CD4-positive, alpha-beta T cell (primary cell): ENCODE measurements at regions of chr15 and their contacts with region 1.

Region 1: DNA sequence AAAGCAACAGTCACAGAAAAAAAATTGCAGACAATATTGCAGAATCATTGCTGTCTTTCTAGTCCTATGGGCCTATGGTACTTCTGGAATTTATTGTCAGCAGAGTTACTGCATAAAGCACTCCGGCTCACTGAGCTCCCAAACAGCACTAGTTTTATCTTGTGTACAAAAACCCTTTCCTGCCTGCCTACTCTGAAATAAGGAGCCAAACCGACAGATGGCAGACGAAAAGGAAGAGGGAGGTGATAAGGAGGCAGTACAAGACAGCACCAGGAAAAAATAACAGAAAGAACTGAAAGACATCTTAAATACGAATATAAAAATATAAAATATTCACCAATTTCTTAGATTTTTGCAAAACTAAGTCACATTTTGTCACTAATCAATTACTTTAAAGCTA is 15.6 kb downstream of the HERC1 start:
- DNase-seq: peak in 4 of 14 experiments; percentile 14 to 36 (median 26)
- ATAC-seq: peak; percentile 64
- H3K4me3 ChIP-seq: no peak overlapping the region
- H3K4me3 Mint-ChIP-seq: peak overlapping the region; percentile 28
- H3K27ac ChIP-seq: no peak overlapping the region
- H3K27ac Mint-ChIP-seq: no peak overlapping the region
- H3K4me1 ChIP-seq: peaks cover 20% of the 10 kb centered on the region
- H3K4me1 Mint-ChIP-seq: peaks cover 87% of the 10 kb centered on the region
- H3K27me3 ChIP-seq: no peaks in the 10 kb centered on the region
- H3K27me3 Mint-ChIP-seq: no peaks in the 10 kb centered on the region
- CTCF ChIP-seq: no peak

Region 2: GRCh38 chr15:62896978-62897647 is 921.1 kb before region 1 on chr15:
- CTCF ChIA-PET with region 1: no interaction called
- POLR2A ChIA-PET with region 1: no interaction called
- intact Hi-C with region 1: no loop called
- DNase-seq: no peak
- ATAC-seq: no peak
- H3K4me3 ChIP-seq: no peak overlapping the region
- H3K4me3 Mint-ChIP-seq: no peak overlapping the region
- H3K27ac ChIP-seq: no peak overlapping the region
- H3K27ac Mint-ChIP-seq: no peak overlapping the region
- H3K4me1 ChIP-seq: no peaks in the 10 kb centered on the region
- H3K4me1 Mint-ChIP-seq: no peaks in the 10 kb centered on the region
- H3K27me3 ChIP-seq: peaks cover 0 to 3% of the 10 kb centered on the region in 2 experiments
- H3K27me3 Mint-ChIP-seq: peaks cover 17% of the 10 kb centered on the region
- CTCF ChIP-seq: no peak

Region 3: DNA sequence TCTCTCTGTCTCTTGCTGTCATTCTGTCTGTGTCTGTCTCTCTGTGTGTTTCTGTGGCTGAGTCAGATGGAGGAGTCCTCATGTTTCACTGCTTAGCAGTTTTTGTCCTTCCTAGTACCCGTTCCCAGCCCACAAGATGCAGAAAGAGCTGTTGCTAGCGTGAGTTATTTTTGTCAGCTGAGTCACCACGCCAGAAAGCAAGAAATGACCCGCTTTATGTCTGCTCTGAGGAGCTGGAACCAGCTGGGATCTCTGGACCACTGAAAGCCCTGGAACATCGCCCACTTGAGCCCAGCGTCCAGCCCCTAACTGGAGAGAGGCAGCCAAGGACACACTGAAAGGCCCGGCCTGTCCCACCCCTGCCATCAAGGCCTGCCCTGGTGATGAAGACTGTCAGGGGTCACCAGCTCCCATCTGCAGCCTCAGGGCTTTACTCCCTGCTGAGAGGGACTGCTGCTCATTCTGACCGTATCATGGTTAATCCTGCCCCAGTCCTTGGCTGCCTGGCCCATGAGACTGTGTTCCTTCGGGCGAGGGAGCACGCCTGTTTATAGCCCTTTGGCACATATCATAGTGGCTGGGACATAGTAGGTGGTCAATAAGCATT is 877.3 kb before region 1 on chr15:
- CTCF ChIA-PET with region 1: no interaction called
- POLR2A ChIA-PET with region 1: no interaction called
- intact Hi-C with region 1: no loop called
- DNase-seq: peak in 2 of 14 experiments; percentile 9 to 26
- ATAC-seq: no peak
- H3K4me3 ChIP-seq: no peak overlapping the region
- H3K4me3 Mint-ChIP-seq: no peak overlapping the region
- H3K27ac ChIP-seq: no peak overlapping the region
- H3K27ac Mint-ChIP-seq: no peak overlapping the region
- H3K4me1 ChIP-seq: no peaks in the 10 kb centered on the region
- H3K4me1 Mint-ChIP-seq: no peaks in the 10 kb centered on the region
- H3K27me3 ChIP-seq: peaks cover 4 to 14% of the 10 kb centered on the region in 2 experiments
- H3K27me3 Mint-ChIP-seq: peaks cover 60% of the 10 kb centered on the region
- CTCF ChIP-seq: no peak

Region 4: GRCh38 chr15:63783441-63783840 is 34.8 kb before region 1 on chr15:
- CTCF ChIA-PET with region 1: no interaction called
- POLR2A ChIA-PET with region 1: interaction called, 5 read pairs
- intact Hi-C with region 1: loop called in 1 of 2 experiments (anchors 5 kb)
- DNase-seq: no peak
- ATAC-seq: no peak
- H3K4me3 ChIP-seq: no peak overlapping the region
- H3K4me3 Mint-ChIP-seq: no peak overlapping the region
- H3K27ac ChIP-seq: no peak overlapping the region
- H3K27ac Mint-ChIP-seq: no peak overlapping the region
- H3K4me1 ChIP-seq: no peaks in the 10 kb centered on the region
- H3K4me1 Mint-ChIP-seq: peaks cover 88% of the 10 kb centered on the region
- H3K27me3 ChIP-seq: no peaks in the 10 kb centered on the region
- H3K27me3 Mint-ChIP-seq: no peaks in the 10 kb centered on the region
- CTCF ChIP-seq: no peak